ENCODE measurements at regions of chr19 and their contacts with region 1.

Region 1: DNA sequence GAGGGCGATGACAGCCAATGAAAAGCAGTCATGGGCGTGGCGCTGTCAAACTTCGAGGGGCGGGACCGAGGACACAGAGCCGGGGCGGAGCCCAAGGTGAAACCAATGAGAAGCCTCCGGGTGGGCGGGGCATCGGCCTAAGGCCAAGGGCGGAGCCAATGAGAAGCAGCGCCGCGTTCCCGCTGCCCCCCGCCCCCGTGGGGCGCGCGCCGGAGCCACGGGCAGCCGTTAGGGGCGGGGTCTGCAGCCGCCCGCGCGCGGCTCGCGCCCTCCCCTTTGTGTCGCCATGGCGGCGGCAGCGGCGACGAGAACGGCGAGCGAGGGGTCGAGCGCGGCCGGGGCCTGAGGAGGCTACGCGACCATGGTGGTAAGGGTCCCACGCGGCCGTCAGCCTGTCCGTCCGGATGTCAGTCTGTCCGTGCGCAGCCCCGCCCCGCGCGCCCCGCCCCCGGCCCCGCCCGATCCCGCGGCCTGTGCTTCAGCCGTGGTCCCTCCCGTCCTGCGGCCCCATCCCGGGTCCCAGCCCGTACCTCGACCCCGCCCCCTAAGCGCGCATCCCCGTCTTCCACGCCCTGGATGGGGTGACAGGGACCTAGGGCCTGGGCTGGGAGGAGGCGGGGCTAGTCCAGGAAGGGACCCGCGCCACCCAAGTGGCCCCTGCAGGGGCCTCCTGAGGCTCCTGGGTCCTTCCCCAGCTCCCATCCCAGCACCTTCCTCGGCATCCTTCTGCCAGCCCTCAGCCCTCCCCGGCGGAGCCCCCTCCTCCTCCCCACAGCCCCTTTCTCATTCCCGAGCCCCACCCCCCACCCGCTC is at the start of gene ARHGAP33:
- DNase-seq: peak; percentile 97
- H3K4me3 ChIP-seq: peak within 1 kb of the TSS; percentile 46 to 63 (median 57)
- H3K27ac ChIP-seq: no peak within 1 kb of the TSS
- H3K4me1 ChIP-seq: peaks cover 4% of the 10 kb centered on the region
- H3K27me3 ChIP-seq: no peaks in the 10 kb centered on the region
- CTCF ChIP-seq: no peak
- POLR2A ChIP-seq: no peak
- total RNA-seq, gene ARHGAP33: 18.4 and 32.8 TPM in 2 replicates

Region 2: GRCh38 chr19:35757749-35758608 is 17.5 kb before region 1 on chr19 and contains the start of gene PROSER3:
- CTCF ChIA-PET with region 1: interaction called, 3 read pairs
- POLR2A ChIA-PET with region 1: no interaction called
- dilution Hi-C with region 1: no loop called
- intact Hi-C with region 1: loop called (anchors 1 kb)
- DNase-seq: peak; percentile 99
- H3K4me3 ChIP-seq: peak within 1 kb of the TSS; percentile 59 to 89 (median 82)
- H3K27ac ChIP-seq: peak within 1 kb of the TSS; percentile 84
- H3K4me1 ChIP-seq: peaks cover 22% of the 10 kb centered on the region
- H3K27me3 ChIP-seq: no peaks in the 10 kb centered on the region
- CTCF ChIP-seq: no peak
- POLR2A ChIP-seq: peak; percentile 29
- total RNA-seq, gene PROSER3: 28.3 and 32.1 TPM in 2 replicates